ENCODE measurements at regions of chr2 and their contacts with region 1.

Region 1: DNA sequence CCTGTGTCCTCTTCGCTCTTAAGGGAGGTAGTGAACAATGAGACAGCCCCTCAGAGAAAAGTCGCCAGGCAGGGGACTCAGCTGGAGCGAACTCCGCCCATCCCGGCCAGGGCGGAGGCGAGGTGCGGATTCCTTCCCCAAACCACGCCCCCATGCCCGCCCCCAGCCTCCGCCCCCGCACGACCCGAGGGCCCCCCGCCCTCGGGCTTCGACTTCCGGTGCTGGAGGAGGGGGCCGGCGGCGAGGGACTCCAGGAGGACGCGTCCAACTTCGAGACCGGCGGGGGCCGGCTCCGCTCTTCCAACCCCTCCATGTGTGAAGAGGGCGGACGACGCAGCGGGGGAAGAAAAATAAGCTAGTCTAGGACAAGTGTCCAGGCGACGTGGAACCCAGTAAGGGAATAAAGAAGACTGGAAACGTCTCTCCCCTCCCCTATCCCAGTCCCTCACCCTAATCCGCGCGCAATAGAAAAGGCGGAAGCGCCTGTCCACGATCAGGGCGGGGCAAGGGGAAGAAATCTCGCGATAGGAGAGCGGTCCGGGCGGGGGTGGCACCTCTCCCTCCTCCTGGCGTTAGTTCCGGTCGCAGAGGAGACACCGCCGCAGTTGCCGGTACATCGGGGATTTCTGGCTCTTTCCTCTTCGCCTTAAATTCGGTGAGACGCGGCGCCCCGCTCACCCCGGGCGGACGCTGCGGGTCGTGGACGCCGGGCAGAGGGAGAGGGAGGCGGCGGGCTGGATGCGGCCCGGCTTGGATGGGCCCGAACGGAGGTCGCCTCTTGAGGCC is at the start of gene BZW1:
- DNase-seq: peak; percentile 97
- H3K4me3 ChIP-seq: peak within 1 kb of the TSS; percentile 84 to 96 (median 94)
- H3K27ac ChIP-seq: peak within 1 kb of the TSS; percentile 99 to 100 (median 100)
- H3K4me1 ChIP-seq: peaks cover 20 to 39% (median 27%) of the 10 kb centered on the region in 4 donors
- H3K27me3 ChIP-seq: no peaks in the 10 kb centered on the region
- CTCF ChIP-seq: no peak
- EP300 ChIP-seq: no peak
- POLR2A ChIP-seq: peak; percentile 99
- total RNA-seq, gene BZW1: 17.1 to 167 (median 110) TPM

Region 2: GRCh38 chr2:200713003-200713703 is 98.4 kb before region 1 on chr2:
- in situ Hi-C with region 1: loop called in 2 of 4 experiments (anchors 10 to 25 kb)
- intact Hi-C with region 1: loop called (anchors 2 kb)
- DNase-seq: peak; percentile 90
- H3K4me3 ChIP-seq: peak overlapping the region; percentile 9 to 41 (median 26)
- H3K27ac ChIP-seq: peak overlapping the region; percentile 67 to 75 (median 74)
- H3K4me1 ChIP-seq: peaks cover 0 to 11% (median 8%) of the 10 kb centered on the region in 4 donors
- H3K27me3 ChIP-seq: peaks cover 3% of the 10 kb centered on the region
- CTCF ChIP-seq: peak; percentile 72 to 83 (median 73)
- EP300 ChIP-seq: no peak
- POLR2A ChIP-seq: peak; percentile 86

Region 3: DNA sequence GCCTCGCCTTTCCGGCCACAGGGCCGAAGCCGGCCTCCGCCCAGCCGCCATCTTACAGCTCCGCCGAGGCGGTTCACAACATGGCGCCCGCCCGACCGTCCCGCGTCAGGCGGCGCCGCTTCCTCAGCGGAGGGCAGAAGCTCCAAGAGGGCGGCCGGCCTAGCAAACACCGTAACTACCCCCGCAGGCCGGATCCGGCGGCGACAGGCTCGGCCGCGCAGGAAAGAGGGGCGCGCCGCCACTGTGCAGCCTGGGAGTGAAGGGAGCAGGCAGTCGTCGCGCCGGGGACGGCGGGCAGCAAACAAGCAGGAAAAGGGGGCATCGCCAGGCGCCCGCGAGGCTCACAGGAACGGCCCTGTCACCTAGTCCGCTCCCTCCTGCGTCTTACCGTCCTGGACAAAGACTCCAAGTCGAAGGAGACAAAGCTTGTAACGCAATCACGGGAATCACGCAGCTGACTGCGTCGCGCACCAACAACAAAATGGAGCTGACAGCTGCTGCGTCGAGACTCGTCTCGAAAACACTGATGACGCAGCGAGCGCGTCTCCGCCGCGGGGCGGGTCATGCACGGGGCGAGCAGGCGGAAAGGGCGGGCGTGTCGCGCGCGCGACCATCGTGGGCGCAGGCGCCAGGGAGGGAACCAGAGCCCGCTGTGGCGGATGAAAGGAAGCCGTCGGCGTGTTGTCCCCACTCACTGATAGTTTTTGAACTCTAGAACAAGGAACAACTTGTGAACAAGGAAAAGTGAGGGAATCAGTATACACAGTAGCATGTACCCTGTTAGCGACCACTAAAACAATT is 52.8 kb after region 1 on chr2 and contains the start of gene CLK1:
- in situ Hi-C with region 1: loop called in 1 of 4 experiments (anchors 10 kb)
- intact Hi-C with region 1: no loop called
- DNase-seq: peak; percentile 98
- H3K4me3 ChIP-seq: peak within 1 kb of the TSS; percentile 73 to 92 (median 80)
- H3K27ac ChIP-seq: peak within 1 kb of the TSS; percentile 98 to 100 (median 99)
- H3K4me1 ChIP-seq: peaks cover 9 to 42% (median 25%) of the 10 kb centered on the region in 4 donors
- H3K27me3 ChIP-seq: no peaks in the 10 kb centered on the region
- CTCF ChIP-seq: peak in 1 of 5 experiments; percentile 11
- EP300 ChIP-seq: no peak
- POLR2A ChIP-seq: peak; percentile 100
- total RNA-seq, gene CLK1: 115 to 231 (median 127) TPM

Region 4: GRCh38 chr2:200888704-200889625 is 77.4 kb after region 1 on chr2 and contains the starts of genes NIF3L1 and PPIL3:
- in situ Hi-C with region 1: no loop called
- intact Hi-C with region 1: loop called (anchors 2 kb)
- DNase-seq: peak; percentile 97
- H3K4me3 ChIP-seq: peak within 1 kb of the TSS; percentile 51 to 73 (median 64)
- H3K27ac ChIP-seq: peak within 1 kb of the TSS; percentile 94 to 98 (median 96)
- H3K4me1 ChIP-seq: peaks cover 8 to 24% (median 14%) of the 10 kb centered on the region in 4 donors
- H3K27me3 ChIP-seq: no peaks in the 10 kb centered on the region
- CTCF ChIP-seq: peak in 1 of 5 experiments; percentile 21
- EP300 ChIP-seq: no peak
- POLR2A ChIP-seq: peak; percentile 81
- total RNA-seq, gene NIF3L1: 14.5 to 26.6 (median 21.5) TPM
- total RNA-seq, gene PPIL3: 16.8 to 18.4 (median 17.7) TPM

Measured in transverse colon (tissue), 4 donors.